ENCODE measurements at regions of chr11 and their contacts with region 1.

Region 1: GRCh38 chr11:66677599-66678375 is at the start of gene RBM4B:
- DNase-seq: peak; percentile 94
- H3K4me3 Mint-ChIP-seq: peak within 1 kb of the TSS; percentile 95
- H3K27ac Mint-ChIP-seq: peak within 1 kb of the TSS; percentile 97
- H3K4me1 Mint-ChIP-seq: peaks cover 35% of the 10 kb centered on the region
- H3K27me3 Mint-ChIP-seq: no peaks in the 10 kb centered on the region
- total RNA-seq, gene RBM4B: 14.3 and 16.6 TPM in 2 replicates

Region 2: GRCh38 chr11:66386171-66387069 is 291.4 kb before region 1 on chr11:
- intact Hi-C with region 1: loop called (anchors 5 kb)
- DNase-seq: peak; percentile 71
- H3K4me3 Mint-ChIP-seq: no peak overlapping the region
- H3K27ac Mint-ChIP-seq: peak overlapping the region; percentile 2
- H3K4me1 Mint-ChIP-seq: peaks cover 10% of the 10 kb centered on the region
- H3K27me3 Mint-ChIP-seq: peaks cover 2% of the 10 kb centered on the region

Region 3: GRCh38 chr11:66438504-66439466 is 239.0 kb before region 1 on chr11 and contains the start of gene MRPL11:
- intact Hi-C with region 1: loop called (anchors 1 kb)
- DNase-seq: peak; percentile 83
- H3K4me3 Mint-ChIP-seq: peak within 1 kb of the TSS; percentile 87
- H3K27ac Mint-ChIP-seq: peak within 1 kb of the TSS; percentile 95
- H3K4me1 Mint-ChIP-seq: peaks cover 17% of the 10 kb centered on the region
- H3K27me3 Mint-ChIP-seq: no peaks in the 10 kb centered on the region
- total RNA-seq, gene MRPL11: 93.0 and 93.6 TPM in 2 replicates

Region 4: GRCh38 chr11:66510271-66510989 is 167.4 kb before region 1 on chr11 and contains the start of gene BBS1:
- intact Hi-C with region 1: loop called (anchors 1 kb)
- DNase-seq: peak; percentile 77
- H3K4me3 Mint-ChIP-seq: peak within 1 kb of the TSS; percentile 90
- H3K27ac Mint-ChIP-seq: peak within 1 kb of the TSS; percentile 61
- H3K4me1 Mint-ChIP-seq: peaks cover 10% of the 10 kb centered on the region
- H3K27me3 Mint-ChIP-seq: no peaks in the 10 kb centered on the region
- total RNA-seq, gene BBS1: 18.0 and 18.1 TPM in 2 replicates

Region 5: GRCh38 chr11:66592457-66593302 is 85.1 kb before region 1 on chr11 and contains the starts of genes CCDC87 and CCS:
- intact Hi-C with region 1: loop called (anchors 1 kb)
- DNase-seq: peak; percentile 96
- H3K4me3 Mint-ChIP-seq: peak within 1 kb of the TSS; percentile 100
- H3K27ac Mint-ChIP-seq: peak within 1 kb of the TSS; percentile 97
- H3K4me1 Mint-ChIP-seq: peaks cover 30% of the 10 kb centered on the region
- H3K27me3 Mint-ChIP-seq: no peaks in the 10 kb centered on the region
- total RNA-seq, gene CCDC87: 0.29 and 0.37 TPM in 2 replicates
- total RNA-seq, gene CCS: 25.3 and 32.1 TPM in 2 replicates

Region 6: GRCh38 chr11:66727282-66727882 is 49.6 kb after region 1 on chr11:
- intact Hi-C with region 1: no loop called
- DNase-seq: no peak
- H3K4me3 Mint-ChIP-seq: peak overlapping the region; percentile 45
- H3K27ac Mint-ChIP-seq: peak overlapping the region; percentile 20
- H3K4me1 Mint-ChIP-seq: peaks cover 12% of the 10 kb centered on the region
- H3K27me3 Mint-ChIP-seq: peaks cover 55% of the 10 kb centered on the region

Region 7: GRCh38 chr11:66842896-66843775 is 165.3 kb after region 1 on chr11 and contains the start of gene RCE1:
- intact Hi-C with region 1: loop called (anchors 1 kb)
- DNase-seq: peak; percentile 90
- H3K4me3 Mint-ChIP-seq: peak within 1 kb of the TSS; percentile 90
- H3K27ac Mint-ChIP-seq: peak within 1 kb of the TSS; percentile 96
- H3K4me1 Mint-ChIP-seq: peaks cover 32% of the 10 kb centered on the region
- H3K27me3 Mint-ChIP-seq: no peaks in the 10 kb centered on the region
- total RNA-seq, gene RCE1: 30.9 and 34.4 TPM in 2 replicates